BJ (cell line): ENCODE measurements at regions of chr20 and their contacts with region 1.

Region 1: GRCh38 chr20:48620519-48621254 is 207.1 kb downstream of the PREX1 start:
- DNase-seq: peak; percentile 15
- H3K4me3 ChIP-seq: peak overlapping the region; percentile 24
- H3K27me3 ChIP-seq: peaks cover 4% of the 10 kb centered on the region
- CTCF ChIP-seq: peak; percentile 95

Region 2: DNA sequence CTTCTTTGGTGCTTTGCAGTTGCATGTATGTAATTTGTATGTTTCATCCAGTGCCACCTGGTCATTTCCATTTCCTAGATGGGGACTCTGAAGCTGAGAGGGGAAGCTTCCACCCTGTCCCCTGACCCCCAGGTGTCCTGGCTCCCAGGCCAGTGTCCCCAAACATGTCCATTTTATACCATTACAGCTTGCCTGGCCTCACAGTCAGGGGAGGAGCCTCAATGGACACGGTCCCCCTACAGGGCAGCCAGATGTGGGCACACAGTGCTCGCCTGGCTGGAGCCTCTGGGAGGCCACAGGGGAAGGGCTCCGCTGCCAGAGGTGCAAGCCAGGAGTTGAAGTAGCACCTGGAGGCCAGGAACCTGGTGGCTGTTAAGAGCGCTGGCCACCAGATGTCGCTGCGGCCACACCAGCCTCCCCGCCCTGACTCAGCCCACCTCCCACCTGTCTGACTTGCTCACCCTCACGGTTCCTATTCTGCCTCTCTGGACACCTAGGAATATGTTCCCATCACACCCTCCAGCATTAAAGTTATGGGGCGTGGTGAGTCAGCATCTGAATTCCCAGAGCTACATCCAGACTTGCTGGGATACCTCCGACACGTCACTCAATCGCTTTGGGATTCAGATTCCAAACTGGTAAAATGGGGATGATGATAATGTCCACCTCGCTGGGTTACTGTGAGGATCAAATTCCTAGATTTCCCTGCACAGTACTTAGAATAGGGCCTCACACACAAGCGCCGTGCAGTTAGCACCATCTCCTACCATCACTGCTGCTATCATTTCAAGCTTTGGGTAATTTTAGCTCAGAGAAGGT is 942.8 kb before region 1 on chr20:
- CTCF ChIA-PET with region 1: interaction called, 157 read pairs
- POLR2A ChIA-PET with region 1: no interaction called
- DNase-seq: no peak
- H3K4me3 ChIP-seq: no peak overlapping the region
- H3K27me3 ChIP-seq: no peaks in the 10 kb centered on the region
- CTCF ChIP-seq: peak; percentile 85

Region 3: GRCh38 chr20:47725248-47725973 is 895.3 kb before region 1 on chr20:
- CTCF ChIA-PET with region 1: interaction called, 58 read pairs
- POLR2A ChIA-PET with region 1: no interaction called
- DNase-seq: peak; percentile 41
- H3K4me3 ChIP-seq: no peak overlapping the region
- H3K27me3 ChIP-seq: no peaks in the 10 kb centered on the region
- CTCF ChIP-seq: peak; percentile 91

Region 4: GRCh38 chr20:47778398-47779338 is 842.0 kb before region 1 on chr20:
- CTCF ChIA-PET with region 1: interaction called, 36 read pairs
- POLR2A ChIA-PET with region 1: no interaction called
- DNase-seq: no peak
- H3K4me3 ChIP-seq: no peak overlapping the region
- H3K27me3 ChIP-seq: peaks cover 10% of the 10 kb centered on the region
- CTCF ChIP-seq: no peak

Region 5: DNA sequence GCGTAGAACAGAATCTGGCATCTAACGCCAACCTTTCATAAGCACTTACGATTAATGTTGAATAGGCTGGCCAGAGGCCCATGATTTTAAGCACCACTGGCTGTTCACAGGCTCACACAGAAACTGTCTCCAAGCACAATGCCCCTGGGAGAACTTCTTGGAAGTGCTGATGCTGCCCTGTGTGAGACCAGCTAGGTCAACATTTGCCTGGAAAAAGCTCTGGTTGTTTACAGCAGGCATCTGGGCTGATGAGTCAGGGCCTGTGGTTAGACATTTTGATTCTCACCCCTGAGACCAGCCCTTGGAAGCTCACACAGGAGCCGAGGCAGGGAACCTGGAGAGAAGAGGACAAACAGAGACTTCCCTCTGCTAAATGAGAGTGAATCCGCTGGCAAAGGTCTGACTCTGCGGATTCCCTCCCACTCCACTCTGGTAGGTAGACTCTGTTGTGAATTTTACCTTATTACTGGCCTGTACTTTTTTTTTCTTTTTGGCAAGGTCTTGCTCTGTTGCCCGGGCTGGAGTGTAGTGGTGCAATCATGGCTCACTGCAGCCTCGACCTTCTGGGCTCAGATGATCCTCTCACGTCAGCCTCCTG is 828.6 kb before region 1 on chr20:
- CTCF ChIA-PET with region 1: interaction called, 95 read pairs
- POLR2A ChIA-PET with region 1: no interaction called
- DNase-seq: peak; percentile 79
- H3K4me3 ChIP-seq: no peak overlapping the region
- H3K27me3 ChIP-seq: peaks cover 5% of the 10 kb centered on the region; the same call in 1 of the 2 replicates
- CTCF ChIP-seq: no peak

Region 6: GRCh38 chr20:48631114-48632045 is 10.7 kb after region 1 on chr20:
- CTCF ChIA-PET with region 1: interaction called, 24 read pairs
- POLR2A ChIA-PET with region 1: no interaction called
- DNase-seq: no peak
- H3K4me3 ChIP-seq: no peak overlapping the region
- H3K27me3 ChIP-seq: no peaks in the 10 kb centered on the region; the same call in 1 of the 2 replicates
- CTCF ChIP-seq: no peak

Region 7: GRCh38 chr20:48807661-48808427 is 187.2 kb after region 1 on chr20:
- CTCF ChIA-PET with region 1: no interaction called
- POLR2A ChIA-PET with region 1: no interaction called
- DNase-seq: no peak
- H3K4me3 ChIP-seq: no peak overlapping the region
- H3K27me3 ChIP-seq: no peaks in the 10 kb centered on the region
- CTCF ChIP-seq: no peak